ENCODE measurements at regions of chrX and their contacts with region 1.

Region 1: DNA sequence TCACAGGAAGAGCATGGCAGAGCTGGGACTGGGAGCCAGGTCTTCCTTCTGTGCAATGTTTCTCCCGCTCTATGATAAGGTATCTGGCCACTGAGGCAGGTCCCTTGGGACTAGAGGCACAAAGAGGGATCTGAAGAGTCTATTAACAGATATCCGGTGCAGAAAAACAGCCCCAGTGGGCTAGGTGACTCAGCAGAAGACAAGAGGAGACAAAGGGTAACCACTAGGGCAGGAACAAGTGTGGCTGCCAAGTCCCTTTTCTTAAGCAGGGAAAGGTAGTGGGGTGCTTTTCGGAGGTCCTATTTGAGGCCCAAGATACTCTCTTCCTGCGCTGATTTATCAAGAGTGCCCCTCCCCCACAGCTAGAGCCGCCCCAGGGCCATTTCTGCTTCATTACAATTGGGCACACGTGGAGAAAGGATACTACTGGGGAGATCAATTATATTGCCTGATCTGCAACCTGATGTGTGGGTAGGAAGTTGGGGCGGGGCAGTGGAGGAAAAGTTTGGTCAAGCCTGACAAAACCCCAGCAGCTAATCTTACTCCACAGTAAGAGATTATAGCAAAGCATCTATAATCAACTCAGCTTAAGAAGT is at the start of gene DGAT2L6:
- DNase-seq: peak; percentile 53
- ATAC-seq: peak; percentile 80
- H3K4me3 ChIP-seq: no peak within 1 kb of the TSS
- H3K27ac ChIP-seq: peak within 1 kb of the TSS; percentile 59
- H3K4me1 ChIP-seq: peaks cover 18% of the 10 kb centered on the region
- H3K27me3 ChIP-seq: no peaks in the 10 kb centered on the region
- CTCF ChIP-seq: no peak
- EP300 ChIP-seq: peak in 1 of 2 experiments; percentile 1; a peak in 1 of 4 replicates
- POLR2A ChIP-seq: no peak
- RAD21 ChIP-seq: no peak
- polyA plus RNA-seq, gene DGAT2L6: 0.11 to 0.23 TPM

Region 2: GRCh38 chrX:70066646-70067045 is 110.4 kb before region 1 on chrX:
- CTCF ChIA-PET with region 1: no interaction called
- POLR2A ChIA-PET with region 1: interaction called, 14 read pairs
- RAD21 ChIA-PET with region 1: no interaction called
- SMC1A ChIA-PET with region 1: no interaction called
- in situ Hi-C with region 1: no loop called
- intact Hi-C with region 1: no loop called
- DNase-seq: no peak
- ATAC-seq: no peak
- H3K4me3 ChIP-seq: no peak overlapping the region
- H3K27ac ChIP-seq: no peak overlapping the region
- H3K4me1 ChIP-seq: no peaks in the 10 kb centered on the region
- H3K27me3 ChIP-seq: no peaks in the 10 kb centered on the region
- CTCF ChIP-seq: no peak
- EP300 ChIP-seq: no peak
- POLR2A ChIP-seq: no peak
- RAD21 ChIP-seq: no peak

Region 3: DNA sequence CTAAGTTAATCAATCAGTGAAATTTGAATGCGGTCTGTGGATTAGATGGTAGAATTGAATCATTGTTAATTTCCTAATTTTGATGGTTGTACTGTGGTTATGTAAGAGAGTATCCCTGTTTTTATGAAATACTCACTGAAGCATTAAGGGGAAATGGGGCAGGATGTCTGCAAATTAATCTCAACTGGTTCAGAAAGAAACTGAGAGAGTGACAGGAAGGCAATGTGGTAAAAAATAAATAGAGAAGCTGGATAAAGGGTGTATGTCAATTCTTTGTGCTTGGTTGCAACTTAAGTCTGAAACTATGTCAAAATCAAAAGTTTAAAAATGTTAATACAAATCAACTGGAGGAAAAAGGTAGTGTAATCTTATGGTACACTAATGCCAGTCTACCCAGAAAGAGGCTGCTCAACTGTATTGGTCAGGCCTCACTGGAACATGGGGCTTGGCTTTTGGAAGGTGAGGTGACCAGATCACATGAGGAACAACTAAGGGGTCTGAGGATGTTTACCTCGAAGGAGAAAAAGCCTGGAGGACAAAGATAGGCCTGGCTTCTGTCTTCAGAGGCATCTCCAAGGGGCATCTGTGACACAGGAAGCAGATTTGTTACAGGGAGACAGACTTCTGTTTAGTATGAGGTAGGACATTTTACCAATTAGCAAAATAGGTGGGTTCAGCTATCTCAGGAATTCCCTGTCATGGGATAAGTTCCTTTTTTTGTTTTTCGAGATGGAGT is 350.7 kb after region 1 on chrX:
- CTCF ChIA-PET with region 1: no interaction called
- POLR2A ChIA-PET with region 1: no interaction called
- RAD21 ChIA-PET with region 1: no interaction called
- SMC1A ChIA-PET with region 1: no interaction called
- in situ Hi-C with region 1: no loop called
- intact Hi-C with region 1: no loop called
- DNase-seq: no peak
- ATAC-seq: no peak; the same call in 2 of the 3 replicates
- H3K4me3 ChIP-seq: no peak overlapping the region
- H3K27ac ChIP-seq: no peak overlapping the region
- H3K4me1 ChIP-seq: no peaks in the 10 kb centered on the region
- H3K27me3 ChIP-seq: no peaks in the 10 kb centered on the region
- CTCF ChIP-seq: no peak
- EP300 ChIP-seq: no peak
- POLR2A ChIP-seq: no peak
- RAD21 ChIP-seq: no peak

Region 4: DNA sequence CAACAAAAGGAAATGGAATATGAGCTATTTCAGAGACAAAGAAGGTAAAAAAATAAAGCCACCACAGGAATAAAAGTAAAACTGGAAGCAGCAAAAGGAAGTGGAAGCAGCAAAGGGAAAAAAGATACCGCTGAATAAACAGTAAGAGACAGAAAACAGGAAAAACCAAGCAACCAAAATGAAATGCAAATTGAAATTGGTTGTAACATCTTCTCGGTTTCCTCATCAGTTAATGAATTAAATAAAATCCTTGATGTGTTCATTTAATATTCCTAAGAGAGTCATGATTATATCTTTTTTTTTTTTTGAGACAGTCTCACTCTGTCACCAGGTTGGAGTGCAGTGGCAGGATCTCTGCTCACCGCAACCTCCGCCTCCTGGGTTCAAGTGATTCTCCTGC is 400.4 kb after region 1 on chrX:
- CTCF ChIA-PET with region 1: no interaction called
- POLR2A ChIA-PET with region 1: no interaction called
- RAD21 ChIA-PET with region 1: no interaction called
- SMC1A ChIA-PET with region 1: no interaction called
- in situ Hi-C with region 1: no loop called
- intact Hi-C with region 1: no loop called
- DNase-seq: no peak
- ATAC-seq: no peak
- H3K4me3 ChIP-seq: no peak overlapping the region
- H3K27ac ChIP-seq: no peak overlapping the region
- H3K4me1 ChIP-seq: no peaks in the 10 kb centered on the region
- H3K27me3 ChIP-seq: no peaks in the 10 kb centered on the region
- CTCF ChIP-seq: no peak
- EP300 ChIP-seq: no peak
- POLR2A ChIP-seq: no peak
- RAD21 ChIP-seq: no peak